Activated CD8-positive, alpha-beta memory T cell treated with anti-CD3 and anti-CD28 coated beads, Interleukin-2, amount 10 ng/mL, durations not matched to agents 7 days and 5 days (primary cell): ENCODE measurements at regions of chr9 and their contacts with region 1.

Region 1: GRCh38 chr9:71683598-71684235 is 84.6 kb downstream of the CEMIP2 start:
- DNase-seq: no peak
- ATAC-seq: no peak
- H3K4me3 Mint-ChIP-seq: no peak overlapping the region
- H3K27ac Mint-ChIP-seq: peak overlapping the region; percentile 78
- H3K4me1 Mint-ChIP-seq: peaks cover 32% of the 10 kb centered on the region
- H3K27me3 Mint-ChIP-seq: no peaks in the 10 kb centered on the region

Region 2: GRCh38 chr9:71647094-71647591 is 36.6 kb before region 1 on chr9:
- CTCF ChIA-PET with region 1: interaction called, 11 read pairs
- DNase-seq: peak; percentile 57
- ATAC-seq: peak; percentile 66
- H3K4me3 Mint-ChIP-seq: peak overlapping the region; percentile 38
- H3K27ac Mint-ChIP-seq: peak overlapping the region; percentile 20
- H3K4me1 Mint-ChIP-seq: peaks cover 42% of the 10 kb centered on the region
- H3K27me3 Mint-ChIP-seq: peaks cover 6% of the 10 kb centered on the region